K562 (cell line): ENCODE measurements at regions of chr17 and their contacts with region 1.

Region 1: DNA sequence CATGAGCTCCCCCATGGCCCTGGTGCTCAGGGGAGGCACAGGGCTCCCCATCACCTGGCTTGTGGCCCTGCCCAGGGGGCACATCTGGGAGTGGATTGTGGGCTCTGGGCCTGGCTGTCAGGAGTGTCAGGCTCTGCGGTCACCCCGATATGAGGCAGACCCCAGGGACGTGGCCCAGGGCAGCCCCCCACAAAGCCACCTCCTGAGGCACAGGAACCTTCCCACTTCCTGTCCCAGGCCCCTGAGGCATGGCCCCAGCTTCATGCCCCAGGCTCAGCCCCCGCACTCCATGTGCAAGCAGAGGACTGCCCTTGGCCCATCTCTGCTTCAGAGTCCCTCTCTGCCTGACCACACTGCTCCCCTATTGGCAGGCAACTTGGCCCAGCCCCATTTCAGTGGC is 160.3 kb downstream of the PCTP start:
- DNase-seq: no peak
- ATAC-seq: no peak
- H3K4me3 ChIP-seq: no peak overlapping the region
- H3K27ac ChIP-seq: no peak overlapping the region
- H3K4me1 ChIP-seq: no peaks in the 10 kb centered on the region; a peak in 1 of 5 replicates
- H3K27me3 ChIP-seq: no peaks in the 10 kb centered on the region; a peak in 1 of 5 replicates
- CTCF ChIP-seq: no peak
- EP300 ChIP-seq: no peak
- POLR2A ChIP-seq: no peak
- RAD21 ChIP-seq: no peak

Region 2: DNA sequence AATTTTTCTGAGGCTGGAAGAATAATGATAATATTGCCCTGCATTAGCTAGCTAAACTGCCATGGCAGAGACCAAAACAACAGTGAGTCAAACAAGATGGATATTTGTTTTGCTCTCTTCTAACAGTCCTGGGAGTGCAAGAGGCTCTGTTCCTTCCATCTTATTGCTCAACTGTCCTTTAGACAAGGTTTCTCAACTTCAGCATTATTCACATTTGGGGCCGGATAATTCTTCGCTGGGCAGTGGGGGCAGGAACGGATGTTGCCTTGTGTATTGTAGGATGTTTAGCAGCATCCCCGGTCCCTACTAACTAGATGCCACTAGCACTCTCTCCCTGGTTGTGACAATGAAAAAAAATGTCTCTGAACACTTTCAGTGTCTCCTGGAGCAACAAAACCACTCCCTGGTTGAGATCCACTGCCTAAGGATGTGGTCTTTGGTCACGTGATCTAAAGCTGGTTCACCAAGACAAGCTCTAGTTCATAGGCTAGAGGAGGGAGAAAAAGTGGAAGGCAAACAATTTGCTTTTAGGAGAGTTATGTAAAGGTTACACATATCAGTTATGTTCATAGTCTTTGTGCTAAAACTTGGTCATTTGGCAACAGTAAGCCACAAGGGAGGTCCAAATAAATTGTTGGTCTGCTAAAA is 15.9 kb before region 1 on chr17:
- CTCF ChIA-PET with region 1: no interaction called
- POLR2A ChIA-PET with region 1: no interaction called
- in situ Hi-C with region 1: no loop called
- intact Hi-C with region 1: loop called (anchors 1 kb)
- DNase-seq: no peak
- ATAC-seq: no peak
- H3K4me3 ChIP-seq: no peak overlapping the region
- H3K27ac ChIP-seq: no peak overlapping the region
- H3K4me1 ChIP-seq: no peaks in the 10 kb centered on the region
- H3K27me3 ChIP-seq: no peaks in the 10 kb centered on the region
- CTCF ChIP-seq: no peak
- EP300 ChIP-seq: no peak
- POLR2A ChIP-seq: no peak
- RAD21 ChIP-seq: no peak